Activated T-helper 1 cell treated with anti-CD3 and anti-CD28 coated beads, Interleukin-12 subunit alpha, Interleukin-12 subunit beta, Interleukin-2, Interleukin-4 antibody, amounts not matched to agents 30 ng/mL and 10 ng/mL and 1 ng/mL, durations not matched to agents 14 hours and 24 hours and 36 hours (primary cell): ENCODE measurements at regions of chr16 and their contacts with region 1.

Region 1: DNA sequence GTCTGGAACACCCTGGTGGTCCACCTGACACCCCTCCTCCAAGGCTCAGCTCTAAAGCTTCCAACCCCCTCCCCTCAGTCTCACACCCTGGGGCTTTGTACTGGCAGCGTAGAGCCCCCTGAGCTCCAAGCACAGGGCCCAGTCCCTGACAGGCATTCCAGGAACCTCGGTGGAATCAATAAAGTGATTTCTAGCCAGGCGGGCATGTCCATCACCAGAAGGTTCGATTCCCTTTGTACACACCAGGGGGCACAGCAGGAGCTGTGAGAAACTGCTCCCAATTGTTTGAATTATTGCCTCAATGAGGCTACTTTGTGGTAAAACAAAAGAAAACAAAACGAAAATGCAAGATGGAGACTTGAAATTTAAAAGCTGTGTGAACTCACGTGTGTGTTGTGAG is 51.8 kb downstream of the SMPD3 start:
- DNase-seq: peak; percentile 41
- H3K4me3 Mint-ChIP-seq: no peak overlapping the region
- H3K27ac Mint-ChIP-seq: no peak overlapping the region
- H3K4me1 Mint-ChIP-seq: peaks cover 14% of the 10 kb centered on the region
- H3K27me3 Mint-ChIP-seq: peaks cover 25% of the 10 kb centered on the region

Region 2: GRCh38 chr16:68417711-68418301 is 21.3 kb after region 1 on chr16:
- intact Hi-C with region 1: loop called (anchors 1 kb)
- DNase-seq: peak; percentile 75
- H3K4me3 Mint-ChIP-seq: peak overlapping the region; percentile 75
- H3K27ac Mint-ChIP-seq: peak overlapping the region; percentile 86
- H3K4me1 Mint-ChIP-seq: peaks cover 38% of the 10 kb centered on the region
- H3K27me3 Mint-ChIP-seq: peaks cover 6% of the 10 kb centered on the region

Region 3: DNA sequence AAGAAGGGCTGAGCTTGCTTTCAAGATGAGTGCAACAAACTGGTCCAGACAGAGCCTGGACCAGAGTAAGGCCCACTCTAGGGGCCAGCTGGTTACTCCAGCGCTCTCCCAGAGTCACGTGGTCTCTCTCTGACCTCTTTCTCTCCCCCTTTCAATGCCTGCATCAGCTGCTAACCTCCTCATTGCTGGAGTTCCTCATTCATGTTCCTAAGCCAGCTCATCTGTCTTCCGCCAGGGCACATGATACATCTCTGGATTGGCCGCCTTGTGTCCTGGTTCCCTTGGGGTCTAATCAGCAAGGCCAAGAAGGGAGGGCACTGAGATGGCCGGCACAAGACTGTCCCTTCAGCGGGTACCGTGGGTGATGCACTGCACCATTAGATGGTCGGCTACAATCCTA is 115.7 kb after region 1 on chr16:
- intact Hi-C with region 1: loop called (anchors 1 kb)
- DNase-seq: no peak
- H3K4me3 Mint-ChIP-seq: no peak overlapping the region
- H3K27ac Mint-ChIP-seq: no peak overlapping the region
- H3K4me1 Mint-ChIP-seq: no peaks in the 10 kb centered on the region
- H3K27me3 Mint-ChIP-seq: peaks cover 26% of the 10 kb centered on the region